CD8-positive, alpha-beta memory T cell (primary cell): ENCODE measurements at regions of chr1 and their contacts with region 1.

Region 1: DNA sequence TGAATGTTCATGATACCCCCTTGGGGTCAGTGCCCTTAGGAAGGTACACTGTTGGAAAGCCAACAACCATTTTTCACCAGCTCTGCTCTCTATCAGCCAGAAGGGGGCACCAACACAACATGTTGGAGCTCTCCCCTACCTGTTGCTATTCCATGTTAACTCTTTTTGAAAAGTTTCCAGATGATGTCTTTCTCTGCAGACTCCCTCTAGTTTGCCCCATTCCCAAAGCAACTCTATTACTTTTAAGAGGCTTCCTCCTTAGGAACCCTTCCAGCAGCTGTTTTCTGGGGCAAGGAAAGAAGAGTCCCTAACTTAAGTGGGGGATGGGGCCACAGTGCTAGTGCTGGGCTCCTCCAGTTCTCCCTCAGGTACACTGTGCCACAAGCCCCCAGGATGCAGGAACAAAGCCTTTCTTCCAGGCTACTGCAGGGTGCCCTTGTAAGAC is 22.9 kb upstream of the NDC1 start:
- DNase-seq: peak in 4 of 5 donors; percentile 31 to 64 (median 46)
- H3K4me3 ChIP-seq: no peak overlapping the region
- H3K4me3 Mint-ChIP-seq: no peak overlapping the region
- H3K27ac ChIP-seq: no peak overlapping the region
- H3K27ac Mint-ChIP-seq: peak overlapping the region in 1 of 8 donors; percentile 9
- H3K4me1 ChIP-seq: no peaks in the 10 kb centered on the region
- H3K4me1 Mint-ChIP-seq: peaks cover 0 to 4% (median 3%) of the 10 kb centered on the region in 3 donors
- H3K27me3 ChIP-seq: no peaks in the 10 kb centered on the region
- H3K27me3 Mint-ChIP-seq: no peaks in the 10 kb centered on the region

Region 2: DNA sequence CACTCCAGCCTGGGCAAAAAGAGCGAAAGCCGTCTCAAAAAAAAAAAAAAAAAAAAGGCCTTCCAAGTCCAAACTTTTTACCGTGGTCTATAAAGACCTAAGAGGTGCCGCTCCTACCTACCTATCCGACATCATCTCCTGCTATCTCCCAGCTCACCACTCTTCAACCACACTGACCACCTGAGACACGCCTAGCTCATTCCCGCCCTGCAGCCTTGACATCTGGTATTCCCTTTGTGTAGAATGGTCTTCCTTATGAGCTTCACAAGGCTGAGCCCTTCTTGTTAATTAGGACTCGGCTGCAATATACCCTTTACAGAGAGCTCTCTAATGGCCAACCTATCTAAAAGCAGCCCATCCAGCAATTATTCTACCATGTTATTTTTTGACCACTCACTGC is 623.4 kb before region 1 on chr1:
- CTCF ChIA-PET with region 1: no interaction called
- POLR2A ChIA-PET with region 1: no interaction called
- DNase-seq: no peak
- H3K4me3 ChIP-seq: peak overlapping the region; percentile 75
- H3K4me3 Mint-ChIP-seq: peak overlapping the region; percentile 96 to 100 (median 98)
- H3K27ac ChIP-seq: peak overlapping the region; percentile 89
- H3K27ac Mint-ChIP-seq: peak overlapping the region; percentile 96 to 100 (median 98)
- H3K4me1 ChIP-seq: peaks cover 20% of the 10 kb centered on the region
- H3K4me1 Mint-ChIP-seq: peaks cover 29 to 39% (median 38%) of the 10 kb centered on the region in 3 donors
- H3K27me3 ChIP-seq: no peaks in the 10 kb centered on the region
- H3K27me3 Mint-ChIP-seq: peaks cover 0 to 6% of the 10 kb centered on the region in 2 donors

Region 3: GRCh38 chr1:53878492-53879105 is 17.6 kb after region 1 on chr1:
- CTCF ChIA-PET with region 1: interaction called, 11 read pairs
- POLR2A ChIA-PET with region 1: no interaction called
- DNase-seq: peak in 1 of 5 donors; percentile 20
- H3K4me3 ChIP-seq: no peak overlapping the region
- H3K4me3 Mint-ChIP-seq: no peak overlapping the region
- H3K27ac ChIP-seq: no peak overlapping the region
- H3K27ac Mint-ChIP-seq: peak overlapping the region in 1 of 8 donors; percentile 44
- H3K4me1 ChIP-seq: no peaks in the 10 kb centered on the region
- H3K4me1 Mint-ChIP-seq: peaks cover 9 to 14% (median 11%) of the 10 kb centered on the region in 3 donors
- H3K27me3 ChIP-seq: no peaks in the 10 kb centered on the region
- H3K27me3 Mint-ChIP-seq: no peaks in the 10 kb centered on the region

Region 4: GRCh38 chr1:53959664-53960250 is 98.8 kb after region 1 on chr1:
- CTCF ChIA-PET with region 1: interaction called, 81 read pairs
- POLR2A ChIA-PET with region 1: no interaction called
- DNase-seq: peak in 2 of 5 donors; percentile 37 to 42
- H3K4me3 ChIP-seq: no peak overlapping the region
- H3K4me3 Mint-ChIP-seq: no peak overlapping the region
- H3K27ac ChIP-seq: no peak overlapping the region
- H3K27ac Mint-ChIP-seq: no peak overlapping the region
- H3K4me1 ChIP-seq: no peaks in the 10 kb centered on the region
- H3K4me1 Mint-ChIP-seq: peaks cover 0 to 13% (median 8%) of the 10 kb centered on the region in 3 donors
- H3K27me3 ChIP-seq: no peaks in the 10 kb centered on the region
- H3K27me3 Mint-ChIP-seq: no peaks in the 10 kb centered on the region